Heart left ventricle (tissue), 16 donors: ENCODE measurements at regions of chr1 and their contacts with region 1.

Region 1: GRCh38 chr1:207941665-207942064 is 30.7 kb upstream of the CD34 start:
- DNase-seq: peak; percentile 83 to 87 (median 87)
- ATAC-seq: peak; percentile 89 to 97 (median 92)
- H3K4me3 ChIP-seq: peak overlapping the region in 7 of 12 donors; percentile 10 to 36 (median 29)
- H3K27ac ChIP-seq: peak overlapping the region; percentile 63 to 94 (median 80)
- H3K4me1 ChIP-seq: peaks cover 0 to 52% (median 10%) of the 10 kb centered on the region in 12 donors
- H3K27me3 ChIP-seq: no peaks in the 10 kb centered on the region
- CTCF ChIP-seq: no peak
- POLR2A ChIP-seq: no peak

Region 2: DNA sequence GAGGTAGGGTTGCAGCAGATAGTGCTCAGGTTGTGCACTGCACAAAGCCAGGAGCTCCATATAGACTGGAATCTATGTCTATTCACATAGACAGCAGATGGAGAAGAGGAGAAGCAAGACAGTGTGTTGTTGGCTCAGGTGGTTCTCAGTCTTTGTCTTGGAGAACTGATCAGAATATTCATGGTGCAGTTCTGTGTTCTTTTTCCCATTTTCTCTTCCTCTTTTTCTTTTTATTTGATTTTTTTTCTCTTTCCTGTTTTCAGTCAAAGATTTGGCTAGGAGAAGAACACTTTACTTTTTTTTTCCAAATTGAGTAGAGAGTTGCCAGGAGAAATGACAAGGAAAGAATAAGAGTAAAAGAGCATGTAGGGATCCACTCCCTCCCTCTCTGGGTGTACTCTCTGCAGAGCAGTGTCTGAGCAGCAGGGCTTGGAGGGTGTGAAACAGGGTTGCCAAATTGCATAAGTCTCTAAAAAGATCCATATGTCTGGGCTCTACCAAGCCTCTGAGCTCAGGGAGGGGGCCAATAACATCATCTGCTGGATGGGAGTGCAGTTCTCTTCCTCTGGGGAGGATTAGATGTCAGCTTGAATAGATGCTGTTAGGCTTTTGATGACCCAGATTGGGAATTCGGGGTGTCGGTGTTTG is 22.0 kb before region 1 on chr1:
- intact Hi-C with region 1: loop called in 1 of 10 experiments (anchors 1 kb)
- DNase-seq: peak in 3 of 5 donors; percentile 41 to 63 (median 43)
- ATAC-seq: peak; percentile 52 to 74 (median 62)
- H3K4me3 ChIP-seq: no peak overlapping the region
- H3K27ac ChIP-seq: peak overlapping the region; percentile 29 to 88 (median 64)
- H3K4me1 ChIP-seq: peaks cover 30 to 80% (median 72%) of the 10 kb centered on the region in 12 donors
- H3K27me3 ChIP-seq: no peaks in the 10 kb centered on the region
- CTCF ChIP-seq: no peak
- POLR2A ChIP-seq: no peak

Region 3: DNA sequence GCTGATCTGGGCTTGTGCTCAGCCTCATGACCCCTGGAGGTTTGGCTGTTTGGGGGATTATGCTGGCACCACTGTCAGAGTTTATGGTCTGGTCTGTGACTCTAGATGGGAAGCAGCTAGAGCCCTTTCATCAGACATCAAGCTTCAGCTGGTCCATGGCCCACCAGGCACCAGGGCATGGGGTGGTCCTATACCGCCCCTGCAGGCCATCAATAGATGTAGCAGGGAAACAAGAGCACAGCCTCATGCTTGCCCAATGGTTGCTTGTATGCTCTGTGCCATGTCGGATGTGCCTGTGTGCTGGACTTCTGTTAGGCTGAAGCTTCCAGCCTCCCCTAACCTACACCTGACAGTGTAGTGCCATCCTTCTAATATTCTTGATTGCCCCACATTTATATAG is 40.3 kb after region 1 on chr1:
- intact Hi-C with region 1: no loop called
- DNase-seq: no peak
- ATAC-seq: peak in 2 of 4 donors; percentile 49 to 65
- H3K4me3 ChIP-seq: no peak overlapping the region
- H3K27ac ChIP-seq: no peak overlapping the region
- H3K4me1 ChIP-seq: no peaks in the 10 kb centered on the region
- H3K27me3 ChIP-seq: no peaks in the 10 kb centered on the region
- CTCF ChIP-seq: peak; percentile 8 to 50 (median 27)
- POLR2A ChIP-seq: no peak

Region 4: DNA sequence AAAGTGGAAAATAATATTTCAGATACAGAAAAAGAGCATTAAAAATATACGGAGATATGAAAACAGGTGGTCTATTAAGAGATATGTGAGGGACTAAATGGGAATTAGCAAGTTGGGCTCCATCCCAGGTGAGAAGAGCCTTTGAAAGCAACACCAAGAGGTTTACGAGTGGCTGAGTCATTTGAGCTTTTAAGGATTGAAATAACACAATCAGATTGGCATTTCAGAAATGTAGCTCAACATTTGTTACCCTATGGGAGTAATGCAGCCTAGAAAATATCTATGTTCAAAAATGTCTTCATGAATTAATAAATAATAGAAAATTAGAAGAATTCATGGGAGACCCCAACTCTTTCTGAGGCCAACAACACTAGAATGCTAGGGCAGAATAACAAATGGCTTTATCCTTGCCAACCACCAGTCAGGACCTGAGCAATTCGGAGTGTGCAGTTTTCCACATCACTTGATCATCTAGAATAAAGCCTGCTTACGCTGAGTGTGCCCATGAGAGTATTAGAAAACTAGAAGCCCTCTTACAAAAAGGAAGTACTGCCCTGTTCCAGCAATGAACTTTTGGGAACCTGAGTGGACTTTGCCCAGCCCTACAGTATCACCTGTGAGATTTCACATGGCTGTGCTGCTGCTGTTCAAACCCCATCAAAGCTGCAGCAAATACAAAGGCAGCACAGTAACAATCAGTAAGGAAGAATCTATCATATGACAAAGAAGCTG is 1103.8 kb after region 1 on chr1:
- intact Hi-C with region 1: no loop called
- DNase-seq: no peak
- ATAC-seq: no peak
- H3K4me3 ChIP-seq: no peak overlapping the region
- H3K27ac ChIP-seq: no peak overlapping the region
- H3K4me1 ChIP-seq: no peaks in the 10 kb centered on the region
- H3K27me3 ChIP-seq: peaks cover 0 to 4% (median 0%) of the 10 kb centered on the region in 9 donors
- CTCF ChIP-seq: no peak
- POLR2A ChIP-seq: no peak